ENCODE measurements at regions of chr1 and their contacts with region 1.

Region 1: DNA sequence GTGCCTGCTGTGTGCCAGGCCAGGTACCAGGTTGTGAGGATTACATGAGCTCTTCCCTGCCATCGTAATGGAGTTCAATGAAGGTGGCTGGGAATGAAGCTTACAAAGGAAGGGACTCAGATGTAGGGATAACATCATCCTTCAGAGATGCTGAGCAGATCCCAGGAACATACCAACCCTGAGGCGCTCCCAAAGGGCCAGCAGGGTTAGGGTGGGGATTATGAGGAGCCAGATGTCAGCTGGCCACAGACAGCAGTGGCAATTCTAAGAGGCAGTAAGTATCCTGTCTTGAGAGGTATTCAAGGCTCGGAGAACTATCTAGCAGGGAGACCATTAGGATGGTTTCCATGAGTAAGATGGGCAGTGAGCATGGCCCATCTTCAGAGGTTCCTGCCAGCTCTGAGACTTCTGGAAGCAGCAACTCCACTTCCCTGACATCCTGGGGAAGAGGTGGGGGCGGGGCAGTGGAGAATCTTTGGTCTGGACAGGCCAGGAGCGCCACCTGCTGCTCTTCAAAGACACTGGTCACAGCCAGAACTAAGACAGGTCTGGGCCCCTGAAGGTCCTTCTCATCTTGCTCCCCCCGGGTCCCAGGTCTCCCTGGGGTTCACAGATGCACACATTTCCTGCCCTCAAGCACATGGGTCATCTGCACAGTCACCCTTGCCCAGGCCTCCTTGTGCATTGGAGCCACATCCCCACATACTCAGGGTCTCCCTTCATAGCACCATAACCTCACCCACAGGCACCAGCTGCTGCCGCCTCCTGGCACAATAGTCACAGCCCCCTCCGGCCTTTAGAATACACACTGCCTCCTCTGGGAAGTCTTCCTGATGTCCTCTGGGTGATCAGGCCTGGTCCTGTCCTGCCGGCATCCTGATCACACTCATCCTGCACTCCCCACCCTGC is 2.7 kb upstream of the SDC3 start:
- DNase-seq: peak; percentile 94

Region 2: GRCh38 chr1:30807324-30808066 is 103.8 kb before region 1 on chr1:
- CTCF ChIA-PET with region 1: interaction called, 159 read pairs
- POLR2A ChIA-PET with region 1: interaction called, 36 read pairs
- DNase-seq: peak; percentile 51